Spleen (tissue), 13 donors: ENCODE measurements at regions of chr5 and their contacts with region 1.

Region 1: GRCh38 chr5:56814963-56815658 is at the start of gene MAP3K1:
- DNase-seq: peak; percentile 97
- H3K4me3 ChIP-seq: peak within 1 kb of the TSS; percentile 79 to 93 (median 88)
- H3K27ac ChIP-seq: peak within 1 kb of the TSS; percentile 96 to 100 (median 99)
- H3K4me1 ChIP-seq: peaks cover 20 to 72% (median 45%) of the 10 kb centered on the region in 6 donors
- H3K27me3 ChIP-seq: no peaks in the 10 kb centered on the region
- CTCF ChIP-seq: peak in 5 of 11 experiments; percentile 13 to 56 (median 37)
- POLR2A ChIP-seq: peak in 1 of 3 donors; percentile 75
- total RNA-seq, gene MAP3K1: 57.3 to 85.4 (median 73.6) TPM

Region 2: GRCh38 chr5:56481428-56482357 is 333.4 kb before region 1 on chr5:
- intact Hi-C with region 1: no loop called
- DNase-seq: peak; percentile 83
- H3K4me3 ChIP-seq: peak overlapping the region; percentile 40 to 73 (median 52)
- H3K27ac ChIP-seq: peak overlapping the region; percentile 83 to 98 (median 96)
- H3K4me1 ChIP-seq: peaks cover 10 to 66% (median 46%) of the 10 kb centered on the region in 6 donors
- H3K27me3 ChIP-seq: peaks cover 0 to 11% (median 0%) of the 10 kb centered on the region in 7 donors
- CTCF ChIP-seq: peak in 5 of 11 experiments; percentile 14 to 44 (median 28)
- POLR2A ChIP-seq: no peak

Region 3: DNA sequence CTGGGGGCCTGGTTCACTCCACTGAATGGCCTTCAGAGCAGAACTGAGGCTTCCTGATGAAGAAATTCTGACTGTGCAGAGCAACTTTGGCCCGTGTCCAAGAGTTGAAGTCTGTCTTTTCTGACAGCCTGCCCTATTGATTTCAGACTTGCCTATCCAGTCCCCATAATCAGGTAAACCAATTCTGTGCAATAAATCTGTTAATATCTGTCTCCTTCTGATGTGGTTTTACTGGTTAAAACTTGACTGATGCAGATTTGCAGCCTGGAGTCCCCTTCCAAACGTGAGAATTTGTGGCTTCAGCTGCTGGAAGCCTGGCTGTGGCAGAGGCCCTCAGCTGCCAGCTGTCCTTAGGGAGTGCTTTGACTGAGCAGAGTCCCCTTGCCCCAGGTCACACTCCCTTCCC is 298.1 kb before region 1 on chr5:
- intact Hi-C with region 1: no loop called
- DNase-seq: no peak
- H3K4me3 ChIP-seq: no peak overlapping the region
- H3K27ac ChIP-seq: peak overlapping the region in 2 of 8 donors; percentile 59 to 68
- H3K4me1 ChIP-seq: peaks cover 0 to 38% (median 29%) of the 10 kb centered on the region in 6 donors
- H3K27me3 ChIP-seq: no peaks in the 10 kb centered on the region
- CTCF ChIP-seq: no peak
- POLR2A ChIP-seq: no peak

Region 4: DNA sequence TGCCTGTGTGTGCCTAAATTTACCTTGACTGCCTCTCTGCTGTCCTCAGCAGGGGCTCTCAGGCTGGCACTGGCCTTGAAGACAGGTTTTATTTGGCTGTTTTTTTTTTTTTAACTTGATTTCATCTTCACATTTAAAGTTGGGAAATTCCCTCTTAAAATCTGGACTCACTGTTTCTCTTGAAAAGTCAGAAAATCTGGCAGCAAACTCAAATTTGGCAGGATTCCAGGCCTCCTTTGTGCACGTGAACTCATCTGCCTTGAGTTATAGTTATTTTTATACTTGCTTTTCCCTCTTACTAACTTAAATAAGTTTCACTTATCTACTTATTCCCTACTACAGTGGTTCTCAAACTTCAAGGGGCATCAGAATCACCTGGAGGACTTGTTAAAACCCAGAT is 118.2 kb before region 1 on chr5:
- intact Hi-C with region 1: loop called (anchors 10 kb)
- DNase-seq: no peak
- H3K4me3 ChIP-seq: no peak overlapping the region
- H3K27ac ChIP-seq: no peak overlapping the region
- H3K4me1 ChIP-seq: peaks cover 6 to 54% (median 24%) of the 10 kb centered on the region in 6 donors
- H3K27me3 ChIP-seq: no peaks in the 10 kb centered on the region
- CTCF ChIP-seq: no peak
- POLR2A ChIP-seq: no peak